ENCODE measurements at regions of chr22 and their contacts with region 1.

Region 1: DNA sequence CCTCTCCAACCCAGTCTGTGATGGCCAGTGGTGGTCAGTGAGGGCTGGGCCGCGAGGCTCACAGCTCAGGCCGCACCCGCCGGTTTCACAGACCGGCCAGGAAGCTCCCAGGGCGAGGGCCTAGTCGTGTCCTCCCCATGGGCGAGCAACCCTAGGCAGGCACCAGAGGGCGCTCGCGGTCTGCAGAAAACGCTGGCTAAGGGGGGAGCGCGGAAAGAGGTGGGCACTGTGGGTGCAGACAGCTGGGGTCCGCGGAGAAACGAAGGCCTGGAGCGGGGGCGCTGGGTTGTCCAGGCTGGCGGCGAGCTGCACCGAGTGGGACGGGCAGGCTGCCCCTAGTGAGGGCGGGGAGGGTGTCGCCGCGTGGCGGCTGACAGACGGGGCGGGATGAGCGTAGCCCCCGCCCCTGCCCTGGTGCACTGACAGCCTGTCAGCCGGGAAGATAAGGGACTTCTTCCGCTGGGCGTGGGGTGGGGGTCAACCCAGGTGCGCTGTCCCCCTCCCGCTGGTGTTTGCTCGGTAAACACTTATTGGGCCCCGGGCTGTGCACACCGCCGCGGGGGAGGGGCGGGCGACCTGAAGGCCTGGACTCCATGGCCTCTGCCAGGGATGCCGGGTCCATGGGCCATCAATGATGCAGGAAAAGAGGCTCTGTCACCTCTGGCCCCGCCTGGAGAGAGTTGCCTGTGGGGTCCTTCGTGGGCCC is 7.5 kb downstream of the GP1BB start:
- DNase-seq: peak; percentile 87
- H3K4me3 Mint-ChIP-seq: peak overlapping the region; percentile 64
- H3K27ac Mint-ChIP-seq: no peak overlapping the region
- H3K4me1 Mint-ChIP-seq: peaks cover 2% of the 10 kb centered on the region
- H3K27me3 Mint-ChIP-seq: peaks cover 1% of the 10 kb centered on the region

Region 2: GRCh38 chr22:19717691-19718455 is 12.9 kb before region 1 on chr22:
- CTCF ChIA-PET with region 1: interaction called, 10 read pairs
- POLR2A ChIA-PET with region 1: no interaction called
- intact Hi-C with region 1: no loop called
- DNase-seq: peak; percentile 83
- H3K4me3 Mint-ChIP-seq: peak overlapping the region; percentile 60
- H3K27ac Mint-ChIP-seq: no peak overlapping the region
- H3K4me1 Mint-ChIP-seq: peaks cover 8% of the 10 kb centered on the region
- H3K27me3 Mint-ChIP-seq: peaks cover 45% of the 10 kb centered on the region

Region 3: GRCh38 chr22:19750507-19751490 is 20.0 kb after region 1 on chr22:
- CTCF ChIA-PET with region 1: interaction called, 13 read pairs
- POLR2A ChIA-PET with region 1: no interaction called
- intact Hi-C with region 1: no loop called
- DNase-seq: no peak
- H3K4me3 Mint-ChIP-seq: no peak overlapping the region
- H3K27ac Mint-ChIP-seq: no peak overlapping the region
- H3K4me1 Mint-ChIP-seq: peaks cover 3% of the 10 kb centered on the region
- H3K27me3 Mint-ChIP-seq: peaks cover 24% of the 10 kb centered on the region

Region 4: GRCh38 chr22:19766511-19767426 is 36.0 kb after region 1 on chr22:
- CTCF ChIA-PET with region 1: interaction called, 12 read pairs
- POLR2A ChIA-PET with region 1: no interaction called
- intact Hi-C with region 1: loop called (anchors 5 kb)
- DNase-seq: peak; percentile 70
- H3K4me3 Mint-ChIP-seq: peak overlapping the region; percentile 29
- H3K27ac Mint-ChIP-seq: no peak overlapping the region
- H3K4me1 Mint-ChIP-seq: peaks cover 6% of the 10 kb centered on the region
- H3K27me3 Mint-ChIP-seq: peaks cover 65% of the 10 kb centered on the region

Region 5: DNA sequence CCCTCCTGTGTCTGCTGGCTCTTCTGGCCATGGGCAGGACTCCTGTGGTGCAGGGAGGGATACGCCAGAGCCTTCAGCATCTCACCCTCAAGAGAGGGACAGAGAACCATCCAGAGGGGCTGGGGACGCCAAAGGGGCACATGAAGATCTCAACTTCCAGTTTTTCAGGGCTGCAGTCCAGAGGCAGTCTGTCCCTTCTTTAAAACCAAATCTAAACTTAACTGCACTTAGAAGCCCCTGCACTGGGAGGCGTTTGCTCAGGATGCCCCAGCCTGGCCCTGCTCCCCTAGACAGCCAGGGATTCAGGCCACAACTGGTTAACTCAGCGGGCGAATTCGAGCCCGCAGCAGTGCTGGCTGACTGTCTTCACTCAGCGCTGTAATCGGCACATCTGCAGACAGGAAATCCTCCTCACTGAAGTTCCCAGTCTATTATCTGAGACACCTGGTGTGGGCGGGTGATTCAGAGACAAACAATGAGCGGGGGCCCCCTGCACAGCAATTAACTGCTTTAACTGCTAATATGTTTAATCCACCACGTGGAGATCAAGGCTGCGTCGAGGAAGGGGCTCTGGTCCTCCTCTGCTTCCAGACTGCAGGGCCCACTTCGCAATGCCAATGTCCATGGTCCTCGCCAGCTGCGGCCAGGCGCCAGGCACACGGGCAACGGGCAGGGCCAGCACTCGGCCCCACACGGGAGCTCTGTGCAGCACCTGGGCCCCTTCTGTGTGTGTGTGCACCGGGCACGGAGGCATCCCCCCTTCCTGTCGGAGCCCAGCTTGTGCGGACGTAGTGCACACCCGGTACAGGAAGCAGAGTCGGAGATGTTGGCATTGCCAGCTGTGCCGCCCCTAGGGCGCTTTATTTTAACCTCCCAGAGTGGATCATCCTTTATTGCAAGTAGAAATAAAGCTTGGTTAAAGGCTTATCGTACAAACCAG is 160.8 kb after region 1 on chr22:
- CTCF ChIA-PET with region 1: interaction called, 22 read pairs
- POLR2A ChIA-PET with region 1: no interaction called
- intact Hi-C with region 1: loop called (anchors 5 kb)
- DNase-seq: peak; percentile 90
- H3K4me3 Mint-ChIP-seq: peak overlapping the region; percentile 69
- H3K27ac Mint-ChIP-seq: peak overlapping the region; percentile 95
- H3K4me1 Mint-ChIP-seq: peaks cover 56% of the 10 kb centered on the region
- H3K27me3 Mint-ChIP-seq: no peaks in the 10 kb centered on the region

Region 6: GRCh38 chr22:19909350-19910179 is 178.8 kb after region 1 on chr22:
- CTCF ChIA-PET with region 1: interaction called, 159 read pairs
- POLR2A ChIA-PET with region 1: no interaction called
- intact Hi-C with region 1: loop called (anchors 1 kb)
- DNase-seq: peak; percentile 88
- H3K4me3 Mint-ChIP-seq: no peak overlapping the region
- H3K27ac Mint-ChIP-seq: peak overlapping the region; percentile 38
- H3K4me1 Mint-ChIP-seq: peaks cover 4% of the 10 kb centered on the region
- H3K27me3 Mint-ChIP-seq: no peaks in the 10 kb centered on the region

Region 7: GRCh38 chr22:19948057-19948760 is 217.4 kb after region 1 on chr22:
- CTCF ChIA-PET with region 1: interaction called, 23 read pairs
- POLR2A ChIA-PET with region 1: no interaction called
- intact Hi-C with region 1: loop called (anchors 2 kb)
- DNase-seq: no peak
- H3K4me3 Mint-ChIP-seq: no peak overlapping the region
- H3K27ac Mint-ChIP-seq: no peak overlapping the region
- H3K4me1 Mint-ChIP-seq: peaks cover 14% of the 10 kb centered on the region
- H3K27me3 Mint-ChIP-seq: no peaks in the 10 kb centered on the region